ENCODE measurements at regions of chr10 and their contacts with region 1.

Region 1: GRCh38 chr10:123008439-123009205 is at the starts of genes ACADSB and IKZF5:
- H3K4me3 Mint-ChIP-seq: peak within 1 kb of the TSS; percentile 100
- H3K27ac Mint-ChIP-seq: peak within 1 kb of the TSS; percentile 99
- H3K4me1 Mint-ChIP-seq: peaks cover 32% of the 10 kb centered on the region
- H3K27me3 Mint-ChIP-seq: peaks cover 3% of the 10 kb centered on the region

Region 2: DNA sequence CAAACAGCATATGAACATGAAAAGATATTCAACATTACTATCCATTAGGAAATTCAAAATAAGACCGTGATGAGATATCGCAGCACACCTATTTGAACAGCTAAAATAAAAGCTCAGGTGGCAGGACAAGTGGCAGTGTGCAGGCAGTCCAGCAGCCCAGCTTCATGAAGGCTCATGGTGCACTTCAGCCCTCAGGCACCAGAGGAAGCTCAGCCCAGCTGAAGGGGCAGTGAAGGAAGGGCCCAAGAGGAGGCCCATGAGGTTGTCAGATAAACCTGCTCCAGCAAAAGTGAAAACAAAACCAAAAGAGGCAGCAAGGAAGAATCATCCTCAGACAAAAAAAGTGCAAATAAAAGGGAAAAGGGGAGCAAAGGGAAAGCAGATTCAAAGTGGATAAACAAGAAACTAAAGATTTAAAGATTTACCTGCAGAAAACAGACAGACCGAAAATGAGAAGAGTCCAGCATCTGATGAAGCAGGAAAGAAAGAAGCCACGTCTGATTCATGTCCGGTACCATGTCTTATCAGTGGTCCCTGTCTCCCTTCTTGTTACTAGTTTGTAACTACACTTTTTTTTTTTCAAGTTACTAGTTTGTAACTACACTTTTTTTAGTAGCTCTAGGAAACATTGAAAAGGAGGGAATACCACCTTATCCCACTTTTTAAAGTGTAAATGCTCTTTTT is 114.2 kb before region 1 on chr10:
- intact Hi-C with region 1: no loop called
- H3K4me3 Mint-ChIP-seq: no peak overlapping the region
- H3K27ac Mint-ChIP-seq: no peak overlapping the region
- H3K4me1 Mint-ChIP-seq: no peaks in the 10 kb centered on the region
- H3K27me3 Mint-ChIP-seq: no peaks in the 10 kb centered on the region

Region 3: DNA sequence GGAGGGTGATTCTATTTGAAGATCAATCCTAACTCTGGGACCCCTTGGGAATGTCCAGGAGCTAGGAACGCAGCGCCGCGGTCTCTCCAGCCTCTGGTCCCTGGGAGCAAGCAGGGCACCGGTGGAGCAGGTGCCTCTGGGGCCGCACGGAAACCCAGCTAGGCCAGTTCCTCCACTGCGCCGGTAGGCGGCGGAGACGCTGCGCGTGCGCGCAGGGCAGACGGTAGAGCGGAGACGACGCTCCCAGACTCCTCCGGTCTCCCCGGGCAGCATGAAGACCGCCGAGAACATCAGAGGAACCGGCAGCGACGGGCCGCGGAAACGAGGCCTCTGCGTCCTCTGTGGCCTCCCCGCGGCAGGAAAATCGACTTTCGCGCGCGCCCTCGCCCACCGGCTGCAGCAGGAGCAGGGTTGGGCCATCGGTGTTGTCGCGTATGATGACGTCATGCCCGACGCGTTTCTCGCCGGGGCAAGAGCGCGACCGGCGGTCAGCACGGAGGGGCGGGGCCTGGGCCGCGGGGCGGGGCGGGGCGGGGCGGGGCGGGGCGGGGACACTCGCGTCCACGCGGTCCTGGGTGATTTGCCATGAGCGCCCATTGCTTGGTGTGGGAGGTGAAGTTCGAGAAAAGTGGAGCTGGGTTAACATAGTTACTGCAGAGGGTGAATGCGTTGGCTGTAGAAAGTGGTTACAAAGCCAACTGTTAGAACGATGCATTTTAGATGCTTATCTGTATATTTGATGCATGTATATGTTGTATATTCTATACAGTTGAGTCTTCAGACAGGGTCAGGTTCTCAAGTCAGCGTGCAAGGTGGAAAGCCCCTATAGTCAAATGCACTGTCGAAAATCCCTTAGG is 28.2 kb before region 1 on chr10 and contains the start of gene PSTK:
- intact Hi-C with region 1: loop called (anchors 1 kb)
- H3K4me3 Mint-ChIP-seq: peak within 1 kb of the TSS; percentile 87
- H3K27ac Mint-ChIP-seq: peak within 1 kb of the TSS; percentile 96
- H3K4me1 Mint-ChIP-seq: peaks cover 6% of the 10 kb centered on the region
- H3K27me3 Mint-ChIP-seq: peaks cover 8% of the 10 kb centered on the region